Transverse colon (tissue), 4 donors: ENCODE measurements at regions of chr3 and their contacts with region 1.

Region 1: DNA sequence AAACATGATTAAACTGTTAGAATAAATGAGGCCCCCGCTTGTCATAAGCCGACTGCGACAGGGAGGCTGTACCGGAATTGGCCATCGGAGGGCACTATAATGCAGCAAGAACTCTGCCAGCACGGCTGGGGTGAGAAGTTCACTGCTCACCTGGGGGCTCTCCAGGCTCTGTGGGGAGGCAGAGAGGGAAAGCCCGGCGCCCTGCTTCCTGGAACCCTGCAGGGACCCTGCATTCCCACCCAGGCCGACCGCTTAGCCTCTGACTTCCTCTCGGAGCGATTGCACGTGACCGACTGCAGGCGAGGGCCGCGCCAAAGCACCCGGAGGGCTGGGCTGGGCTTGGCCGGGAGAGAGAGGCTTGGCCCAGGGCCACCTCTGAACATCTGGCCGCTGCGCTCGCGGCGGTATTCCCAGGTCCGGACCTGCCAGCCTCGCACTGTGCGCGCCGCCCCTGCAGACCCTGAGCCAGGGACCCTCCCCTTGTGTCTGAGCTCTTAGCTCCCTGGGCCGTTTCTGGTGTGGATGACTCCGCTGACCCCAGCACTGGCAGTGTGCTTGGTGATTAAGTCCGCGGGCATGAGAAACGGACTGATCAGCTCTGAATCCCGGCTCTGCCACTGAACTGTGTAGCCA is 26.2 kb downstream of the DRD3 start:
- DNase-seq: peak; percentile 76
- H3K4me3 ChIP-seq: peak overlapping the region in 3 of 4 donors; percentile 30 to 57 (median 39)
- H3K27ac ChIP-seq: peak overlapping the region in 2 of 4 donors; percentile 21 to 27
- H3K4me1 ChIP-seq: peaks cover 0 to 6% (median 0%) of the 10 kb centered on the region in 4 donors
- H3K27me3 ChIP-seq: no peaks in the 10 kb centered on the region
- CTCF ChIP-seq: peak; percentile 83 to 92 (median 86)
- EP300 ChIP-seq: no peak
- POLR2A ChIP-seq: no peak

Region 2: GRCh38 chr3:114043205-114043604 is 109.4 kb before region 1 on chr3:
- in situ Hi-C with region 1: no loop called
- intact Hi-C with region 1: no loop called
- DNase-seq: no peak
- H3K4me3 ChIP-seq: no peak overlapping the region
- H3K27ac ChIP-seq: no peak overlapping the region
- H3K4me1 ChIP-seq: no peaks in the 10 kb centered on the region
- H3K27me3 ChIP-seq: no peaks in the 10 kb centered on the region
- CTCF ChIP-seq: no peak
- EP300 ChIP-seq: no peak
- POLR2A ChIP-seq: no peak

Region 3: GRCh38 chr3:114418724-114419543 is 266.3 kb after region 1 on chr3:
- in situ Hi-C with region 1: loop called in 1 of 4 experiments (anchors 10 kb)
- intact Hi-C with region 1: no loop called
- DNase-seq: no peak
- H3K4me3 ChIP-seq: no peak overlapping the region
- H3K27ac ChIP-seq: peak overlapping the region; percentile 16 to 63 (median 46)
- H3K4me1 ChIP-seq: peaks cover 0 to 11% (median 3%) of the 10 kb centered on the region in 4 donors
- H3K27me3 ChIP-seq: no peaks in the 10 kb centered on the region
- CTCF ChIP-seq: peak; percentile 76 to 91 (median 86)
- EP300 ChIP-seq: no peak
- POLR2A ChIP-seq: no peak